Stomach (tissue), 19 donors: ENCODE measurements at regions of chr17 and their contacts with region 1.

Region 1: GRCh38 chr17:72539981-72540897 is 419.4 kb downstream of the SOX9 start:
- DNase-seq: peak; percentile 80 to 91
- H3K4me3 ChIP-seq: peak overlapping the region in 2 of 4 donors; percentile 12 to 24
- H3K27ac ChIP-seq: peak overlapping the region; percentile 70 to 85 (median 75)
- H3K4me1 ChIP-seq: peaks cover 12 to 20% (median 16%) of the 10 kb centered on the region in 4 donors
- H3K27me3 ChIP-seq: peaks cover 0 to 4% (median 0%) of the 10 kb centered on the region in 3 donors
- CTCF ChIP-seq: peak in 5 of 7 experiments; percentile 69 to 96 (median 84)
- EP300 ChIP-seq: no peak
- POLR2A ChIP-seq: no peak

Region 2: DNA sequence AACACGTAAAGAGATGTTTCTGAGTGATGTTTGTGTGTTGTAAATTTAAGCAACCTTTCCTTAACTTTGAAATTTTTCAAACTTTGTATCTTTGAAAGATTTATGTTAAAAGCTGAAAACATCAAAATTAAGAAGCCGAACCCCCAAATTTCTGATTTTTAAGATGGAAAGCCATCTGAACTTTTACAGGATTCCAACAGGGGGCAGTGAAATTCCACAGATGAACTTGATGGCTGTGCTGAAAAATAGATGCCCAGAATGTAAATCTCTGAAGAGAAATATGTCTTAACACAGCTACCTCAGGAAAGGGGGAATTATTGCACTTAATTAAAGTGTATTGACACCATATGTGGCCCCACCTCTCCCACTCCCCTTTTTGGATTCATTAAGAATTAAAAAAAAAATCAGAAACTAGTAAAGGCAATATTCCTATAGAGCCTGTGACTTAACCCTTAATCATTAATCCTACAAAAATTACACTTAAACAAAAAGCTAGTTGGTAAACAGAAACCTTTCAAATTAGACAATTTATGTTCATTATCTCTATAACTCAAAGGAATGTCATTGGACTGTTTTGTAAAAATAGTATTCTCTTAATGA is 1773.0 kb before region 1 on chr17:
- intact Hi-C with region 1: loop called (anchors 10 kb)
- DNase-seq: peak in 1 of 2 donors; percentile 62
- H3K4me3 ChIP-seq: no peak overlapping the region
- H3K27ac ChIP-seq: no peak overlapping the region
- H3K4me1 ChIP-seq: no peaks in the 10 kb centered on the region
- H3K27me3 ChIP-seq: no peaks in the 10 kb centered on the region
- CTCF ChIP-seq: peak in 4 of 7 experiments; percentile 34 to 51 (median 49)
- EP300 ChIP-seq: no peak
- POLR2A ChIP-seq: no peak

Region 3: DNA sequence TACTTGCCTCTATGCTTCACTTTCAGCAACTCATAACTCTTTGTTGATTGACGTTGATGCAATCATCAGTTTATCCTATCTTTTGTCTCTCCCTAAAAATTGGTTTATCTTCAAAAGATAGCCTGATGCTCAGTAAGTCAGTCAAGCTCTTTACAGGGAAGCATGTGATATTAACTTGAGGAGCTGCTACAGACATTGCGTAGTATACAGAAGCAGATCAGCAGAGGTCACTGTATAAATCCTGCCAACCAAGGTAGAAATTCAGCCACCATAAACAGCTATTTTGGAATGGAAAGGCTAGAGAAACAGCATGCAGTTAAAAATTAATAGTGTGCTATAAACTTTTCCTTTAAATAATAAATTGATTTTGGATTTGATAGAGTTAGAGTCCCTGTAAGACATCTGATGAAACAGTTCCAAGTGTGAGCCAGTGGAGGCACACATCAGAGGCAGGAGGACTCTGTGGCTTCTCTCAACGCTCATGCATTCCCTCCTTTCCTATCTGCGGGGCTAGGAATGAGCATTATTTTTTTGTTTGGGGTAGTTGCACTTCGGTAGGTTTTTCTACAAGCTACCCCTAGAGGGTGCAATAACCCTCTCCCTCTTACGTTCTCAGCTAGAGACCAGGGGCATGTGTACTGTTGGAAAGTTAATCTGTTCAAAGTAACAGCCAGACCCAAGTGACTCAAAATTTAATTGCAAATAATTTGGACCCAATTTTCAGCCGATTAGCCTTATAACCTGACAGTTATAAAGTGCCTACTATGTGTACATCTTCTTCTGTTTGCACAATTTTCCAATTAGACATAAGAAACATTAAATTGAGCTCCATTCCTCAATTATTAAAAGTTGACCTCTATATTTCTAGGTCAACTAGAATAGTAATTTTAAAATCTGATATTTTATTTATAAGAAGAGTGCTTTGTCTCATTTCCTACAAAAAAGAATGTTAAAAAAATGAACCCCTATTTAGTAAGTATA is 1067.1 kb before region 1 on chr17:
- intact Hi-C with region 1: loop called (anchors 10 kb)
- DNase-seq: peak in 1 of 2 donors; percentile 79
- H3K4me3 ChIP-seq: no peak overlapping the region
- H3K27ac ChIP-seq: no peak overlapping the region
- H3K4me1 ChIP-seq: no peaks in the 10 kb centered on the region
- H3K27me3 ChIP-seq: no peaks in the 10 kb centered on the region
- CTCF ChIP-seq: peak in 3 of 7 experiments; percentile 40 to 54 (median 50)
- EP300 ChIP-seq: no peak
- POLR2A ChIP-seq: no peak

Region 4: DNA sequence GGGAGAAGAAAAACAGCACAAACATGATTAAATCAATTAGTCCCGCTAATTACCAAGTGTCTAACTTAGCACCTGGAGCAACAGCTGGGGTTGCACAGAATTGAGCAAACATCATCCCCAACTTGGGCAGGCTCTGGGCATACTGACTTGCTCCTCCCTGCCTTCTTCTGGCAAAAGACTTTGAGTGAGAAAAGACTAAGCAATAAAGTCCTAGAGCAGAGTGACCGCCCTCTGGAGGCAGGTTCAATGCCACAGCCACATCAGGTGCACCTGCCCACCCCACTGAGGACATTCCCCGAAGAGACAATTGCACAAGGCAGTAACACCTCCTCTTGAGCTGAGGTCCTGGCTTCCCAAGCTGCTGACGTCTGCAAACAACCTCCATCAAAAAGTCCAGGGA is 61.1 kb before region 1 on chr17:
- intact Hi-C with region 1: loop called (anchors 10 kb)
- DNase-seq: peak in 1 of 2 donors; percentile 48
- H3K4me3 ChIP-seq: no peak overlapping the region
- H3K27ac ChIP-seq: no peak overlapping the region
- H3K4me1 ChIP-seq: peaks cover 23 to 44% (median 31%) of the 10 kb centered on the region in 4 donors
- H3K27me3 ChIP-seq: peaks cover 0 to 4% (median 0%) of the 10 kb centered on the region in 3 donors
- CTCF ChIP-seq: peak in 1 of 7 experiments; percentile 26
- EP300 ChIP-seq: no peak
- POLR2A ChIP-seq: no peak